ENCODE measurements at regions of chr9 and their contacts with region 1.

Region 1: DNA sequence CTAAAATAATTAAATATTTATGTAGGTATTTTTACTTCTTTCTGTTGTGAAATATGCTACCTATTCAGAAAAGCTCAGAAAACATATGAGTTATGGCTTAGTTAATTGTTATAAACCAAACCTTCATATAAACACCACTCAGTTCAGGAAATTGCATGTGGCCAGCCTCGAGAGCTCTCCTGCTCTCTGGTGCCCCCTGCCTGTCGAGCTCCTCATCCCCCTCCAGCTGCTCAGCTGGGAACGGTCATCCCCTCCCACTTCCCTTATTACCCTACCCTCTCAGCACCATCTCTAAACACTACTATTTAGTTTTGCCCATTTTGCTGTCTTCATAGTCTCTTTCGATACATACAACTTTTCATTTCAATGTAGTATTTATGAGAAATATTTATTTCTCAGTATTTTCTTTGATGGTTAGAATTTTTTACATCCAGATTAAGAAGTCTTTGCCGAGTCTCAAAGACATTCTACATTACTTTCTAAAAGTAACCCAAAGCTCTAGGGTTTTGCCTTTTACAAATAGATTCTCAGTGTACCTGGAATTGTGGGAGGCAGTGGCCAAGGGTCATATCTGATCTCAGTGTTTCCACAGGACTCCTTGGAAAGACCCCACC is 51.2 kb upstream of the SEMA4D start:
- DNase-seq: peak; percentile 75 to 93 (median 84)
- ATAC-seq: peak; percentile 99
- H3K4me3 ChIP-seq: no peak overlapping the region
- H3K4me3 Mint-ChIP-seq: no peak overlapping the region
- H3K27ac ChIP-seq: no peak overlapping the region
- H3K27ac Mint-ChIP-seq: peak overlapping the region; percentile 40
- H3K4me1 ChIP-seq: peaks cover 15% of the 10 kb centered on the region
- H3K4me1 Mint-ChIP-seq: peaks cover 26% of the 10 kb centered on the region
- H3K27me3 ChIP-seq: no peaks in the 10 kb centered on the region
- H3K27me3 Mint-ChIP-seq: no peaks in the 10 kb centered on the region
- CTCF ChIP-seq: peak; percentile 99

Region 2: GRCh38 chr9:89218040-89218928 is 330.9 kb before region 1 on chr9:
- CTCF ChIA-PET with region 1: no interaction called
- POLR2A ChIA-PET with region 1: no interaction called
- intact Hi-C with region 1: no loop called
- DNase-seq: no peak
- ATAC-seq: no peak
- H3K4me3 ChIP-seq: no peak overlapping the region
- H3K4me3 Mint-ChIP-seq: no peak overlapping the region
- H3K27ac ChIP-seq: no peak overlapping the region
- H3K27ac Mint-ChIP-seq: no peak overlapping the region
- H3K4me1 ChIP-seq: no peaks in the 10 kb centered on the region
- H3K4me1 Mint-ChIP-seq: no peaks in the 10 kb centered on the region
- H3K27me3 ChIP-seq: peaks cover 0 to 3% of the 10 kb centered on the region in 2 experiments
- H3K27me3 Mint-ChIP-seq: peaks cover 9% of the 10 kb centered on the region
- CTCF ChIP-seq: no peak

Region 3: DNA sequence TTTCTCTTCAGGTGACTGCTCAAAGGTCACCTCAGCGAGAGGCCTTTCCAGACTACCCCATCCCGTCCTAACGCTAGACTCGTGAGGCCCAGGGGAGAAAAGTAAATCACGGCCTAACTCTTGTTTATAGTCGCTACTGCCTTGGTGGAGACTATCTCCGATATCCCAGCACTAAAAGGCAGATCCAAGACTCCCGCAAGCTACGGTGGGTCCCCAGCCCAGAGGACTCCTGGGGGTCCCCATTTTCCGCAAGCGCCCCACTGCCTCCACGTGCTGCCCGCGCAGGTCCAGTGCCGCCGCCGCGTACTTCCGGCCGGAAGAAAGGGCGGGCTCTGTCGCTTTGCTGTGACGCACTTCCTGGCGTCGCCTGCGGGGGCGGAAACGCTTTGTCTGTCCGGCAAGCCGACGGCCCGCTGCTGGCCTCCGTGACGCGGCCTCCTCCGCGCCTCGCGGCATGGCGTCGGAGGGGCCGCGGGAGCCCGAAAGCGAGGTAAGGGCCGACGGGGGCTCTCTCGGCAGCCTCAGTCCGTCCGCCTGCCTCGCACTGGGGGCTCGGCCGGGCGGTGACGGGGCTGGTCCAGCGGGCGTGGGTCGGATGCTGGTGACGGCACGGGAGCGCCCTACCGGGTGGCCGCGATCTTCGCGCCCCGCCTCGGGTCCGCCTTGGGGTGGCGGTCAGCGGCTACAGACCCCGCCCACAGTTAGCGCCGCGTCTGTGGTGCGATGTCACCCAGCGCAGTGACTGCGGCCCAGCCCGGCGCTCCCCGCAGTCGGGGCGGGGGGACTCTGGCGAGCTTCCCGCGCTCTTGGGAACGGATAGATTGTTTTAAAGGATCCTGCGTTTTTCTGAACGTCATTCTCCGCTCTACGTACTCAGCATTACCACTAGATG is 230.8 kb before region 1 on chr9 and contains the start of gene SECISBP2:
- CTCF ChIA-PET with region 1: no interaction called
- POLR2A ChIA-PET with region 1: no interaction called
- intact Hi-C with region 1: loop called (anchors 1 to 2 kb)
- DNase-seq: peak; percentile 85 to 97 (median 90)
- ATAC-seq: peak; percentile 87
- H3K4me3 ChIP-seq: peak within 1 kb of the TSS; percentile 69
- H3K4me3 Mint-ChIP-seq: peak within 1 kb of the TSS; percentile 88
- H3K27ac ChIP-seq: peak within 1 kb of the TSS; percentile 97 to 99
- H3K27ac Mint-ChIP-seq: peak within 1 kb of the TSS; percentile 94
- H3K4me1 ChIP-seq: peaks cover 22% of the 10 kb centered on the region
- H3K4me1 Mint-ChIP-seq: peaks cover 77% of the 10 kb centered on the region
- H3K27me3 ChIP-seq: no peaks in the 10 kb centered on the region
- H3K27me3 Mint-ChIP-seq: no peaks in the 10 kb centered on the region
- CTCF ChIP-seq: no peak
- total RNA-seq, gene SECISBP2: 109 to 112 TPM

Region 4: GRCh38 chr9:89428901-89429890 is 119.9 kb before region 1 on chr9:
- CTCF ChIA-PET with region 1: interaction called, 156 read pairs
- POLR2A ChIA-PET with region 1: interaction called, 22 read pairs
- intact Hi-C with region 1: loop called (anchors 1 kb)
- DNase-seq: peak; percentile 44 to 85 (median 60)
- ATAC-seq: peak; percentile 81
- H3K4me3 ChIP-seq: no peak overlapping the region
- H3K4me3 Mint-ChIP-seq: peak overlapping the region; percentile 63
- H3K27ac ChIP-seq: peak overlapping the region in 1 of 2 donors; percentile 67
- H3K27ac Mint-ChIP-seq: peak overlapping the region; percentile 96
- H3K4me1 ChIP-seq: peaks cover 100% of the 10 kb centered on the region
- H3K4me1 Mint-ChIP-seq: peaks cover 95% of the 10 kb centered on the region
- H3K27me3 ChIP-seq: no peaks in the 10 kb centered on the region
- H3K27me3 Mint-ChIP-seq: no peaks in the 10 kb centered on the region
- CTCF ChIP-seq: peak; percentile 58

Region 5: DNA sequence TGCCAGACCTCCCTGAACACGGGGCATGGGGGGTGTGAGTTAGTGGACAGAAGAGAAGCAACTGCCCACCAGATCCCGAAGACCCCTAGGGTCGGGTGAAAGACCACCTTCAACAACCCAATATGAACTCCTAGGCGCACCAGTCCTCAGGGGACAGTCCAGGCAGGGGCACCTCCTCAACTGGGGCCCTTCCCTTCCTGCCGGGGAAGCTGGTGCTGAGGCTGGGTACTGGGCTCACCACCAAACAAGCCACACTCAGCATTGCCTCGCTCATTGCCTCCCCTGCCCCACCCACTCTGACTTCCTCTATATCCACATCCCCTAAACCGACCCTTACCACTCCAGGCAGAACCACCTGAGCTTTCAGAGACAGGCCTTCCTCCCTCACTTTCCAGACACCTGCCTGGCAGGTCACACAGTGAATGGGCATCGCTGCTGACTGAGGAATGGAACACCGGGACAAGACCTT is 93.7 kb before region 1 on chr9:
- CTCF ChIA-PET with region 1: interaction called, 20 read pairs
- POLR2A ChIA-PET with region 1: interaction called, 24 read pairs
- intact Hi-C with region 1: no loop called
- DNase-seq: peak in 8 of 14 experiments; percentile 47 to 81 (median 62)
- ATAC-seq: peak; percentile 65
- H3K4me3 ChIP-seq: peak overlapping the region; percentile 13
- H3K4me3 Mint-ChIP-seq: peak overlapping the region; percentile 71
- H3K27ac ChIP-seq: peak overlapping the region; percentile 68 to 79
- H3K27ac Mint-ChIP-seq: peak overlapping the region; percentile 96
- H3K4me1 ChIP-seq: peaks cover 86% of the 10 kb centered on the region
- H3K4me1 Mint-ChIP-seq: peaks cover 91% of the 10 kb centered on the region
- H3K27me3 ChIP-seq: no peaks in the 10 kb centered on the region
- H3K27me3 Mint-ChIP-seq: no peaks in the 10 kb centered on the region
- CTCF ChIP-seq: no peak

Region 6: DNA sequence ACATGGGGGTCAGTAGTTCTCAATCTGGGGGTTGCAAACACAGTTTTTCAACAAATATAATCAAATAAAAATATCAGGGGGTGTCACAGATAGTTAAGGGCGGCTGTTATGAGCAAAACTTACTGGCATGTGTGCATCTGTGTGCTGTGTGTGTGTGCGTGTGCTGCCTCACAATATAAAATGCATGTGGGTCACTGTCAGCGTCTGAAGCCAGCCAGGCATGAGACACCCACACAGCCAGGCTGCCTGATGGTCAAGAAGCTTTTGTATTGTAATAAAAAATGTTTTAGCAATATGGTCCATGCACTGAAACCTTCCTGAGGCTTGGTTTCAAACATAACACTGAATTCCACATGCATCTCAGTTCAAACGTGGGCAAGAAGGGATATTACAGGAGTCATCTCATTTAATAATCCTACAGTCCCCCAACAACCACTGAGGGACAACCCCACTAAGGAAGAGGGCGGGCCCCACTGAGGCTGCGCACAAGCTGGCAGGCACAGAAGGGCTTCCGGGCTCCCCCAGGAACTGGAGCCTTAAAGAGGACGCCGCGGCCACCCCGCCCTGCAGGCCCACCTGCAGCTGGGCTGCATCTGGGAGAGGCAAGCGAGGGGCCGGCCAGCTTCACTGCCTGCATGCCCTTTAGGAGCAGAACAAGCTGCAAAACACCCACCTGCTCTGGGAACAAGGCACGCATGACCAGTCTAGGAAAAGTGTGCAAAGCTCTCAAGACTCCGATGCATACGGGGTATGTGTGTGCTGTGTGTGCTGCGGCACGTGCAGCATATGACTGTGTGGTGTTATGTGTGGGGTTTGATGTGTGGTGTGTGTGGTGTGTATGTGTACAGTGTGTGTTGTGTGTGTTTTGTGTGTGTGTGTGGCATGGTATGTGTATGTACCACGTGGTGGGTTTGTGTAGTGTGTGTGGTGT is 65.3 kb before region 1 on chr9:
- CTCF ChIA-PET with region 1: interaction called, 24 read pairs
- POLR2A ChIA-PET with region 1: interaction called, 17 read pairs
- intact Hi-C with region 1: no loop called
- DNase-seq: peak in 13 of 14 experiments; percentile 54 to 87 (median 70)
- ATAC-seq: peak; percentile 72
- H3K4me3 ChIP-seq: peak overlapping the region; percentile 72
- H3K4me3 Mint-ChIP-seq: peak overlapping the region; percentile 94
- H3K27ac ChIP-seq: peak overlapping the region; percentile 52 to 67
- H3K27ac Mint-ChIP-seq: peak overlapping the region; percentile 88
- H3K4me1 ChIP-seq: peaks cover 77% of the 10 kb centered on the region
- H3K4me1 Mint-ChIP-seq: peaks cover 91% of the 10 kb centered on the region
- H3K27me3 ChIP-seq: no peaks in the 10 kb centered on the region
- H3K27me3 Mint-ChIP-seq: no peaks in the 10 kb centered on the region
- CTCF ChIP-seq: no peak

Region 7: DNA sequence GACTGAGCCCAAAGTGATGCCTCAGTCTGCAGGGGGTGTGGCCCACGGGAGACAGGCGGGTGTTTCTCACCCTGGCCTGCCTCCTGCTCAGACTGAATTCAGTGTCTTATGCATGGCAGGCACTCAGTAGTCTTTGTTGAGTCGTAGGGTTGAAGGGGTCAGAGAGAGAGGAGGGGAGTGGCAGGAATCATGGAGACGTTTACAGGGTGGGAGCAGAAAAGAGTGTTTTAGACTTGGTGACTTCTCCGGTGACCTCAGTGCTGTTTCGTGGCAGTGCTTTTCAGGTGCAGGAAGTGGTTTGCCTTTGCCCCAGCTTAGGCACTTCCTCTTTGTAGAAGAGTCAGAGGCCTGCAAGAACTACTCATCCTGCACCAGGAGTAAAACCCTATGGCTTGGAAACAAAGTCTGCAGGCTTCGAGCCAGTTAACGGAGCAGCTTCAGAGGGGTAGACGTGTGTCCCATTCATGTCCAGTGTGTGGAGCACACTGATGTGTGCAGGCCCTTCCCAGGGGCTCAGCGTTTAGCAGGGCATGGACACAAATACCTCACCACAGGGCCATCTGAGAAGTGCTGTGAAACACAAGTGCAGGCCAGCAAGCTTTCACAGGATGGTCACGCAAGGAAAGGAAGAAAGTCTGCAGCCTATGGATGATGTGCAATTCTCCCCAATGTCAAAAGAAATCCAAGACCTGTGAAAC is 26.7 kb before region 1 on chr9:
- CTCF ChIA-PET with region 1: interaction called, 31 read pairs
- POLR2A ChIA-PET with region 1: interaction called, 6 read pairs
- intact Hi-C with region 1: no loop called
- DNase-seq: peak; percentile 54 to 94 (median 68)
- ATAC-seq: peak; percentile 85
- H3K4me3 ChIP-seq: peak overlapping the region; percentile 29
- H3K4me3 Mint-ChIP-seq: peak overlapping the region; percentile 69
- H3K27ac ChIP-seq: peak overlapping the region; percentile 81 to 94
- H3K27ac Mint-ChIP-seq: peak overlapping the region; percentile 94
- H3K4me1 ChIP-seq: peaks cover 96% of the 10 kb centered on the region
- H3K4me1 Mint-ChIP-seq: peaks cover 93% of the 10 kb centered on the region
- H3K27me3 ChIP-seq: no peaks in the 10 kb centered on the region
- H3K27me3 Mint-ChIP-seq: no peaks in the 10 kb centered on the region
- CTCF ChIP-seq: no peak

Measured in CD4-positive, alpha-beta T cell (primary cell).